Calu3 (cell line): ENCODE measurements at regions of chr16 and their contacts with region 1.

Region 1: DNA sequence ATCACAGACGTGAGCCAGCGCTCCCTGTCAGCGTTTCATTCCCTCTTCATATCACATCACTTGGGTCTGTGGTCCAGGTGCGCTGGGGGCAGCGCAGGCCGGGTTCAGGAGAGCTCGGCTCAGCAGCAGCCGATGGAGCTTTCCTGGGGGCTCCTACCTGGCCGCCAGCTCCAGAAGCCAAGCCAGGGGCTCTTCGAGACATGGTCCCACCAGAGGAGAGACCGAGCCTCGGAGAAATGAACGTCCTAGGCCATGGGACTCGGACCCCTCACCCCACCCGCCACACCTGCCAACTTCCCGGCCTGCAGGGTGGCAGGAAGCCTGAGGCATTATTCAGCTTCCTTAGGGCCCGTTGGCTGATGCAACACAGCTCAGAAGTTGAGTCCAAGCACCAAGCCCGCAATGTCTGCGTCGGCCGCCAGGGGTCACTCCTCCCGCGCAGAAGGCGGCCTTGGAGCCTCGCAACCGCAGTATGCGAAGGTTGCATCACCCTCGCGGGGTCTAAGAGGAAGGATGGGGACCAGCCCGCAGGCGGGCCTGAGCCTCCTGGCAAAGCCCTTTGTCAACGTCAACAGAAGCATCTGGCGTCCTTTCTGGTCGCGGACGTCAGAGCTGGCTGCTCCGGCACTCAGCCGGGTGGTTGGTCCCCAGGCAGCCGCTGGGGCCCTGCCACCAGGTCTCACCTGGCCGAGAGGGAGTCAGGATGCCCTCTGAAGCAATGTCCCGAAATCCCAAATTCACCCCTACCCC is 13.2 kb upstream of the KLHDC4 start:
- DNase-seq: peak; percentile 98
- H3K4me3 Mint-ChIP-seq: peak overlapping the region; percentile 45
- H3K27ac Mint-ChIP-seq: peak overlapping the region; percentile 92
- H3K4me1 Mint-ChIP-seq: peaks cover 31% of the 10 kb centered on the region
- H3K27me3 Mint-ChIP-seq: no peaks in the 10 kb centered on the region
- CTCF ChIP-seq: peak; percentile 99

Region 2: DNA sequence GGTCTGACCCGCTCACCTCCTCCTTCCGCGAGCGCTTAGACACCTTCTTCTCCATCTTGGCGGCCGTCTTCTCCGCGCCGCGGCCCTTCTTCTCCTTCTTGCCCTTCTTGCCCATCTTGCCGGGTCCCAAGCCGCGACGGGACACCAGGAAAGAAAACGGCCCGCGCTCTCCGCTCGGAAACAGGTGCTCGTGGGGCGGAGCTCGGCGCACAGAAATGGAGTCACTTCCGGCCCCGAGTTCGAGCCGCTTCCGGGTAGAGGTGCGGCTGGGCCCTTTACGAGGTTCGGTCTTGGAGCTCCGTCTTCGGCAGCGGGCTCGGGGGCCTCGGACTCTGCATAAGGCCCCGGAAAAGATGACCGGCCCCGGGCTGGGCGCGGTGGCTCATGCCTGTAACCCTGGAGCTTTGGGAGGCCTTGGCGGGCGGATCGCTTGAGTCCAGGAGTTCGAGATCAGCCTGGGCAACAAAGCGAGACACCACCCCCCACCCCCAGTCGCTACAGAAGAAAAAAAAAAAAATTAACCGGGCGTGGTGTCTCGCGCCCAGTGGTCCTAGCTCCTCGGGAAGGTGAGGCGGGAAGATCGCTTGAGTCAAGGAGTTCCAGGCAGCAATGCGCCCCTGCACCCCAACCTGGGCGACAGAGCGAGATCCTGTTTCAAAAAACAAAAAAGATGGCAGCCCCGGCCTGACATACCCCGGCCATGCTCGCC is 13.1 kb before region 1 on chr16 and contains the start of gene KLHDC4:
- CTCF ChIA-PET with region 1: interaction called, 10 read pairs
- intact Hi-C with region 1: no loop called
- DNase-seq: peak; percentile 93
- H3K4me3 Mint-ChIP-seq: peak within 1 kb of the TSS; percentile 95
- H3K27ac Mint-ChIP-seq: peak within 1 kb of the TSS; percentile 91
- H3K4me1 Mint-ChIP-seq: peaks cover 25% of the 10 kb centered on the region
- H3K27me3 Mint-ChIP-seq: no peaks in the 10 kb centered on the region
- CTCF ChIP-seq: no peak
- total RNA-seq, gene KLHDC4: 106 and 109 TPM in 2 replicates

Region 3: GRCh38 chr16:87806603-87807546 is 27.9 kb after region 1 on chr16:
- CTCF ChIA-PET with region 1: interaction called, 32 read pairs
- intact Hi-C with region 1: loop called (anchors 2 kb)
- DNase-seq: peak; percentile 81
- H3K4me3 Mint-ChIP-seq: peak overlapping the region; percentile 83
- H3K27ac Mint-ChIP-seq: peak overlapping the region; percentile 100
- H3K4me1 Mint-ChIP-seq: peaks cover 43% of the 10 kb centered on the region
- H3K27me3 Mint-ChIP-seq: no peaks in the 10 kb centered on the region
- CTCF ChIP-seq: no peak

Region 4: GRCh38 chr16:87853411-87854052 is 74.5 kb after region 1 on chr16:
- CTCF ChIA-PET with region 1: interaction called, 9 read pairs
- intact Hi-C with region 1: loop called (anchors 5 kb)
- DNase-seq: peak; percentile 97
- H3K4me3 Mint-ChIP-seq: peak overlapping the region; percentile 54
- H3K27ac Mint-ChIP-seq: peak overlapping the region; percentile 89
- H3K4me1 Mint-ChIP-seq: peaks cover 79% of the 10 kb centered on the region
- H3K27me3 Mint-ChIP-seq: no peaks in the 10 kb centered on the region
- CTCF ChIP-seq: no peak

Region 5: GRCh38 chr16:87877938-87878507 is 99.0 kb after region 1 on chr16:
- CTCF ChIA-PET with region 1: interaction called, 185 read pairs
- intact Hi-C with region 1: no loop called
- DNase-seq: peak; percentile 34
- H3K4me3 Mint-ChIP-seq: no peak overlapping the region
- H3K27ac Mint-ChIP-seq: no peak overlapping the region
- H3K4me1 Mint-ChIP-seq: peaks cover 29% of the 10 kb centered on the region
- H3K27me3 Mint-ChIP-seq: peaks cover 25% of the 10 kb centered on the region
- CTCF ChIP-seq: peak; percentile 23

Region 6: GRCh38 chr16:88026964-88027938 is 248.2 kb after region 1 on chr16:
- CTCF ChIA-PET with region 1: no interaction called
- intact Hi-C with region 1: no loop called
- DNase-seq: no peak
- H3K4me3 Mint-ChIP-seq: no peak overlapping the region
- H3K27ac Mint-ChIP-seq: no peak overlapping the region
- H3K4me1 Mint-ChIP-seq: no peaks in the 10 kb centered on the region
- H3K27me3 Mint-ChIP-seq: no peaks in the 10 kb centered on the region
- CTCF ChIP-seq: no peak